Endothelial cell of umbilical vein (primary cell): ENCODE measurements at regions of chr1 and their contacts with region 1.

Region 1: GRCh38 chr1:84143796-84144565 is at the start of gene PRKACB:
- DNase-seq: peak; percentile 87
- H3K4me3 ChIP-seq: peak within 1 kb of the TSS; percentile 38 to 99 (median 99)
- H3K27ac ChIP-seq: peak within 1 kb of the TSS; percentile 95
- H3K4me1 ChIP-seq: peaks cover 25% of the 10 kb centered on the region
- H3K27me3 ChIP-seq: no peaks in the 10 kb centered on the region
- CTCF ChIP-seq: no peak
- POLR2A ChIP-seq: peak; percentile 73
- total RNA-seq, gene PRKACB: 72.6 and 77.5 TPM in 2 replicates

Region 2: GRCh38 chr1:83834621-83835264 is 309.2 kb before region 1 on chr1:
- CTCF ChIA-PET with region 1: no interaction called
- POLR2A ChIA-PET with region 1: no interaction called
- dilution Hi-C with region 1: no loop called
- intact Hi-C with region 1: no loop called
- DNase-seq: no peak
- H3K4me3 ChIP-seq: no peak overlapping the region
- H3K27ac ChIP-seq: no peak overlapping the region
- H3K4me1 ChIP-seq: no peaks in the 10 kb centered on the region
- H3K27me3 ChIP-seq: peaks cover 2% of the 10 kb centered on the region in 2 experiments
- CTCF ChIP-seq: no peak
- POLR2A ChIP-seq: no peak

Region 3: DNA sequence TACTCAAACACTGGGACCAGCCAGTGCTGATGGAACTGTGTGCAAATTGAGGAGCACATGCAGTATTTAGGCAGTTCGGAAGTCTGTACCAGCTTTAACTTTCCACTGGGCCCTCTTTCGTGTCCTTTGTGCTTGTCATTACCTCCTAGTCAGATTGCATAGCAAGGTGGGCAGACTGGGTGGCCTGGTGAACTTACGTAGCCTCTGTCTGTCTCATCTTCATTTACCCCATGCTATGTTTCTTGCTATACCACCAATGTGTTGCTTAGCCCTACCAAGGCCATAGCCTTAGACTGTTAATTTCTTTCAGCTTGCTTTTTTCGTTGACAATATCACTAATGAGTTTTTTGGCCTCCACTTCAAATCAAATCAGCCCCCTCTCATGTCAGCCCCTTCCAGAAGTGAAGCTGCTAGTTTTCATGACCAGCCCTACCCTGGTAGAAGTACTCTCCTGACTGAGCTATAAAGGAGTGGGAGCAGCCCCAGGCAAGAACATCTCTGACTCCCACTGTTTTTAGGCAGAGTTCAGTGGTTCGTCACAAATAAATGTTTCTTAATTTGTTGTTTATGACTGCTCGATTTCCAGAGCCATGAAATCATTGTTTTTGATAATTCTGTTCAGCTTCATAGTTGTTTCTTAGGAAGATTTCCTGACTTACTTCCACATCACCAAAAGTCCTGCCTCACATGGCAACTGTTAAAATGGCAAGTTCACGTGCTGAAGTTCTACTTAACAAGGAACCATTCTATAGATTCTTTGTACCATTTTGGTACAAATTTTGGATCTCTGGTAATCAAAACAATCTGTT is 19.3 kb after region 1 on chr1:
- CTCF ChIA-PET with region 1: interaction called, 19 read pairs
- POLR2A ChIA-PET with region 1: interaction called, 3 read pairs
- dilution Hi-C with region 1: no loop called
- intact Hi-C with region 1: no loop called
- DNase-seq: no peak
- H3K4me3 ChIP-seq: no peak overlapping the region
- H3K27ac ChIP-seq: no peak overlapping the region
- H3K4me1 ChIP-seq: peaks cover 4% of the 10 kb centered on the region
- H3K27me3 ChIP-seq: no peaks in the 10 kb centered on the region
- CTCF ChIP-seq: no peak
- POLR2A ChIP-seq: no peak

Region 4: GRCh38 chr1:84192681-84193080 is 48.7 kb after region 1 on chr1:
- CTCF ChIA-PET with region 1: interaction called, 37 read pairs
- POLR2A ChIA-PET with region 1: no interaction called
- dilution Hi-C with region 1: no loop called
- intact Hi-C with region 1: no loop called
- DNase-seq: no peak
- H3K4me3 ChIP-seq: no peak overlapping the region
- H3K27ac ChIP-seq: no peak overlapping the region
- H3K4me1 ChIP-seq: no peaks in the 10 kb centered on the region
- H3K27me3 ChIP-seq: no peaks in the 10 kb centered on the region
- CTCF ChIP-seq: no peak
- POLR2A ChIP-seq: no peak

Region 5: DNA sequence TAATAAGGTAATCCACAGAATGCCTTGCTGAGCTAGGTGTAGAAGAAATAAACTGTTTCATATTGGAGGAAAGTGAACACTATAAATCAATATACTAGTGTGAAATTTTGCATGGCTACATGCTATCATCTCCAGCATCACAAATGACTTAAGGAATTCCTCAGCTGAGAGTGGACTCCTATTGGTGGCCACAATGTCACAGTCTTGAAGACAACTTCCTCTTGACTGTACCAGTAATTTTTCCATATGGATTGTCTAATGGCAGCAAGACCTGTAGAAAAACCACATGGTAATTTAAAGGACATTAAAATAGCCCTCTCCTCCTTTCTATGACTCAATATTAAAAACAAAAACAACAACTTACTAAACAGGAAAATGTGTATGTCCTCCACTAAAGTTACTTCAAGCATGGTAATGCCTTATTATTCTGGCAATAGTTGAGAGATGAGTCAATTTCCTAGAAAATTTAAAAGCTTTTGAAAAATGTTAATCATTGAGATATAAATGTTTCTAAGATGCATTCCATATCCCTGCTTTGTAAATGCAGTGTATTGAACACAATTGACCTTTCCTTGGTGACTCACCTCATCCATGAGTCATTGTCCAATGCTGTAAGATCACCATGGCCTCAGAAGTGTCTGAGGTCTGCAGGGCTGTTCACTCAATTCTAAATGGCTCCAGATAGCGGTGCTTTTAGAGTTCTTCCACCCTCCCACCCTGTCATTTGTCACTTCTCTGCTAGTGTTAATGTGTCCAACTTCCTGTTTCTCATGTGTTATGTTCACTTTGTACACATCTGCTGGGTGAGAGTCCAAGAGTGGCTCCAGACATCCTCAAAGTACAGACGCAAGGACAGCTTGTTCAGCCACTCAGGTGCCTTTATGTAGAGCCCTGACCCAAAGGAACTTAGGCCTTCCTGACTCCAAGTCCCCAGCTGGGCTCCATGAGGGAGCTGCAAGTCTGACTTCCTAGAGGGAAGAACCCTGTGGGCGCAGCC is 221.5 kb after region 1 on chr1:
- CTCF ChIA-PET with region 1: interaction called, 4 read pairs
- POLR2A ChIA-PET with region 1: no interaction called
- dilution Hi-C with region 1: no loop called
- intact Hi-C with region 1: loop called (anchors 1 kb)
- DNase-seq: peak; percentile 96
- H3K4me3 ChIP-seq: no peak overlapping the region
- H3K27ac ChIP-seq: peak overlapping the region; percentile 97
- H3K4me1 ChIP-seq: peaks cover 28% of the 10 kb centered on the region
- H3K27me3 ChIP-seq: no peaks in the 10 kb centered on the region
- CTCF ChIP-seq: no peak
- POLR2A ChIP-seq: peak; percentile 51

Region 6: DNA sequence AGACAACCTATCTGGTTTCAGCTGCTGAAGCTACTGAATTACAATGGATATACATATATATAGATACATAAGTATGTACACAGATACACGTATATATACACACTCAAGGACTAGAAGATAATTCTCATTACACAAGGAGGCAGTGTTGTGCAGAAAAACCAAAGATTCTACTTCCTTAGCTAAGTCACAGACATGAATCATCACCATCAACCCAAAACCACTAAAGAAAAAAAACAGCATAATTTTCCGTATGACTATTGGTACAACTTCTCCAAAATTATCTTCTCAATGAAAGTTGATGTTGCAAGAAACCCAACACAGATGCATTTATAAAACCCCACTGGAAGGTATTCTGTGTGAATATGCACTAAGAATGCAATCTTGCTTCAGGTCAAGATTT is 298.3 kb after region 1 on chr1:
- CTCF ChIA-PET with region 1: interaction called, 201 read pairs
- POLR2A ChIA-PET with region 1: no interaction called
- dilution Hi-C with region 1: loop called (anchors 25 kb)
- intact Hi-C with region 1: no loop called
- DNase-seq: peak; percentile 89
- H3K4me3 ChIP-seq: no peak overlapping the region
- H3K27ac ChIP-seq: no peak overlapping the region
- H3K4me1 ChIP-seq: peaks cover 2% of the 10 kb centered on the region
- H3K27me3 ChIP-seq: no peaks in the 10 kb centered on the region
- CTCF ChIP-seq: peak; percentile 18 to 26
- POLR2A ChIP-seq: no peak

Region 7: GRCh38 chr1:84620720-84621313 is 476.8 kb after region 1 on chr1:
- CTCF ChIA-PET with region 1: interaction called, 10 read pairs
- POLR2A ChIA-PET with region 1: no interaction called
- dilution Hi-C with region 1: no loop called
- intact Hi-C with region 1: loop called (anchors 1 kb)
- DNase-seq: peak; percentile 80
- H3K4me3 ChIP-seq: peak overlapping the region; percentile 33 to 66 (median 38)
- H3K27ac ChIP-seq: peak overlapping the region; percentile 69
- H3K4me1 ChIP-seq: peaks cover 15% of the 10 kb centered on the region
- H3K27me3 ChIP-seq: no peaks in the 10 kb centered on the region
- CTCF ChIP-seq: peak; percentile 65 to 84
- POLR2A ChIP-seq: no peak

Region 8: GRCh38 chr1:84653130-84653677 is 509.2 kb after region 1 on chr1:
- CTCF ChIA-PET with region 1: no interaction called
- POLR2A ChIA-PET with region 1: no interaction called
- dilution Hi-C with region 1: no loop called
- intact Hi-C with region 1: no loop called
- DNase-seq: no peak
- H3K4me3 ChIP-seq: no peak overlapping the region
- H3K27ac ChIP-seq: no peak overlapping the region
- H3K4me1 ChIP-seq: no peaks in the 10 kb centered on the region
- H3K27me3 ChIP-seq: no peaks in the 10 kb centered on the region
- CTCF ChIP-seq: no peak
- POLR2A ChIP-seq: no peak

Region 9: DNA sequence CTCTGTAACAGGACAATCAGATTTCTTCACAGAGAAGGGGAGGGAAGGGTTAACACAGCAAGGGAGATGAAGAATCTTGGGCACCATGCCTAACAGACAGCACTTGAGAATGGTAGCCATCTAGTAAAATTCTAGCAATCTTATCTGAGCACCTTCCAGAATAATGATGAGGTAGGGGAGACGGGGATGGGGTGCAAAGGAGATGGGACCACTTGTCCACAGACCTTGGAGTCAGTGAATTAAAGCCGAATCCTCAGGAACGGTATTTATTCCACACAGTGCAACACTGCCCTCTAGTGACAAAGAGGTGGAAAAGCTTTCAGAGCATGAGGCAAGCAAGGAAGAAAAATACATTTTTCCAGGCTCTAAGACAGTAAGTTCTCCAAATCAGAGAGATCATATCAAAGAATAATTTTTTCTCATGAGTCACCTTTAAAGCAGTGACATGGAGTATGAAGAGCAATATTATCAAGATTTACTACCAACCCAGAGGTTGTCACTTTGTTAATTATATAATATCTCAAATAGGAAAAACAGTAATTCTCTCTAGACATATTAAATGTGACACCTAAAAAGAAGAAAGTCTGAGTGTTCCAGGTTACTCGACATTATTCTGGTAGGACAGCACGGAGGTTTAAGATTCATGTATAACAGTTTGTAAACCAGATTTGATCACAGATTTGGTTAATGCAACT is 792.3 kb after region 1 on chr1:
- CTCF ChIA-PET with region 1: interaction called, 4 read pairs
- POLR2A ChIA-PET with region 1: no interaction called
- dilution Hi-C with region 1: no loop called
- intact Hi-C with region 1: loop called (anchors 5 kb)
- DNase-seq: peak; percentile 57
- H3K4me3 ChIP-seq: no peak overlapping the region
- H3K27ac ChIP-seq: no peak overlapping the region
- H3K4me1 ChIP-seq: peaks cover 5% of the 10 kb centered on the region
- H3K27me3 ChIP-seq: peaks cover 17 to 36% of the 10 kb centered on the region in 2 experiments
- CTCF ChIP-seq: peak; percentile 71 to 77
- POLR2A ChIP-seq: no peak